ENCODE measurements at regions of chr15 and their contacts with region 1.

Region 1: GRCh38 chr15:89760303-89761008 is 9.4 kb upstream of the MESP1 start:
- DNase-seq: peak; percentile 93
- ATAC-seq: peak; percentile 74
- H3K4me3 ChIP-seq: no peak overlapping the region
- H3K27ac ChIP-seq: peak overlapping the region; percentile 98
- H3K4me1 ChIP-seq: peaks cover 35% of the 10 kb centered on the region
- H3K27me3 ChIP-seq: no peaks in the 10 kb centered on the region
- CTCF ChIP-seq: peak; percentile 94

Region 2: DNA sequence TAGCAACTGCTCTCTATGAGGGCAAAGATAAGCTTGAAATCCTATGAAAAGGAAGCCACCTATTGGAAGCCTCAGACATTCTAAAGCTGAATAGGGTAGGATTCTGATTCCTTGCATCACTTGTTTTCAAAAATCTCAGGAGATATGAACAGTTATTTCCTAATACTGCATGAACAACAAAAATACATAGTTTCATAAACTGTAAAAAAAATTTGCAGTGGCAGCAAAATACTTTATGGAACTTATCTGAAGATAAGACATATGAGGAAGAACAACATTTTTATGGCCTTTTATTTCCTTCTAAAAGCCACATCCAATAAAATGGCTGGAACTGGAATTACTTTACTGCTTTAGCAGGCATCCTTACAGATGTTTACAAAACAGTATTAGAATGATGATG is 103.5 kb after region 1 on chr15:
- CTCF ChIA-PET with region 1: interaction called, 10 read pairs
- POLR2A ChIA-PET with region 1: no interaction called
- intact Hi-C with region 1: no loop called
- DNase-seq: no peak
- ATAC-seq: no peak
- H3K4me3 ChIP-seq: no peak overlapping the region
- H3K27ac ChIP-seq: no peak overlapping the region
- H3K4me1 ChIP-seq: peaks cover 4% of the 10 kb centered on the region
- H3K27me3 ChIP-seq: no peaks in the 10 kb centered on the region
- CTCF ChIP-seq: no peak

Region 3: DNA sequence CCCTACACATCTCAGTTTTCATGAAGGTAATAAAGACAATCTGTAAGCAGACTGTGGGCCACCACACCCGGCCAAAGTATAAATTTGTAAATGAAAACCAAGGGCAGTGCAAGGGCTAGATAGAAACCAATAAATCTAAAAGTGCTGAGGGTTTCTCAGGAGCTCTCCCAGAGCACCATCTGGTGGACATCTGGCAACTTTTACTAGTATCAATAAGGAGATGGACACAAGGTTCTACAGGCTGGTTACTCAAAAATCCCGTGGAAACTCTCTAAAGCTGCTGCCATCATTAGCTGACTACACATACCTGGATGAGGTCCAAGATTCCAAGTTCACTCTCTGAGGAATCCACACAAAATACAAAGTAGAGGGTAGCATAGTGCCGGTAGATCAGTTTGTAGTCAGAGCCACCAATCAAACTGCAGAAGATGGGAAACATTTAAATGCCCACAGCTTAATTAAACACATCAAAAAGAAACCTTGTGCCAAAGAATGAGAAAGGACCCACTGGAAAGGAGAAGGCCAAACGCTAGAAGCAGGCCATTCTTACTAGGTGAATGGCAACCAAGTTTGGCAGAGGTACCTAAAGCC is 127.9 kb after region 1 on chr15:
- CTCF ChIA-PET with region 1: interaction called, 16 read pairs
- POLR2A ChIA-PET with region 1: no interaction called
- intact Hi-C with region 1: loop called (anchors 1 kb)
- DNase-seq: peak; percentile 82
- ATAC-seq: peak; percentile 66
- H3K4me3 ChIP-seq: no peak overlapping the region
- H3K27ac ChIP-seq: 0 out of 2 replicates have a peak overlapping the region, but pooled peaks have one; percentile 2
- H3K4me1 ChIP-seq: peaks cover 13% of the 10 kb centered on the region
- H3K27me3 ChIP-seq: no peaks in the 10 kb centered on the region
- CTCF ChIP-seq: peak; percentile 79

Region 4: GRCh38 chr15:89912674-89913396 is 152.4 kb after region 1 on chr15 and contains the start of gene ARPIN:
- CTCF ChIA-PET with region 1: no interaction called
- POLR2A ChIA-PET with region 1: no interaction called
- intact Hi-C with region 1: no loop called
- DNase-seq: peak; percentile 44
- ATAC-seq: peak; percentile 68
- H3K4me3 ChIP-seq: peak within 1 kb of the TSS; percentile 84
- H3K27ac ChIP-seq: no peak within 1 kb of the TSS
- H3K4me1 ChIP-seq: peaks cover 27% of the 10 kb centered on the region
- H3K27me3 ChIP-seq: no peaks in the 10 kb centered on the region
- CTCF ChIP-seq: no peak
- total RNA-seq, gene ARPIN: 4.5 and 8.0 TPM in 2 replicates

Measured in PC-3 (cell line).